Common myeloid progenitor, CD34-positive (primary cell): ENCODE measurements at regions of chr17 and their contacts with region 1.

Region 1: GRCh38 chr17:44086364-44087311 is 16.1 kb downstream of the G6PC3 start:
- DNase-seq: no peak
- H3K4me3 ChIP-seq: no peak overlapping the region
- H3K27ac ChIP-seq: peak overlapping the region in 1 of 2 experiments; percentile 25
- H3K4me1 ChIP-seq: no peaks in the 10 kb centered on the region
- H3K27me3 ChIP-seq: no peaks in the 10 kb centered on the region

Region 2: DNA sequence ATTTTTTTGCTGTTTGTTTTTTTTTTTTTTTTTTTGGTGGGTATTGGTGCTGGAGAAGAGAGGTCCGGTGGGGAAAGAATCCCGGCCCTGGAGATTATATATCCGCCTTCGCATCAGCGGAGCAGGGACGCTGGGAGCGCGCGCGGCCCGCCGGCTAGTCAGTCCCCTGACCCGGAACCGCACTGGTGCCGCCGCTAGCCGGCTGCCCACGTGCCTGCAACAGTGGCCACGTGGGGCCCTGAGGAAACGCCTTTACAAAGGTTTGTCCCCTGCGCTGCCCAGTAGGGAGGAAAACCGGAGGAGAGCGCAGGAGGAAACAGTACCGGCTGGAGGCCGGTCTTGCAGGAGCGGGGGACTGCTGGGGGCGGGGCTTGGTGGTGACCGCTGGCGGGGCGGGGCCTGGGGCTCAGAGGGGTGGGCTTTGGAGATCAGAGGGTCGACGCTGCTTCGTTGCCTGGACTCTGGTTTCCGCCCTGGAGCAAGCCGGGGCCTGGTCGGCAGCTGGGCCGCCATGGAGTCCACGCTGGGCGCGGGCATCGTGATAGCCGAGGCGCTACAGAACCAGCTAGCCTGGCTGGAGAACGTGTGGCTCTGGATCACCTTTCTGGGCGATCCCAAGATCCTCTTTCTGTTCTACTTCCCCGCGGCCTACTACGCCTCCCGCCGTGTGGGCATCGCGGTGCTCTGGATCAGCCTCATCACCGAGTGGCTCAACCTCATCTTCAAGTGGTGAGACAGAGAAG is 16.0 kb before region 1 on chr17 and contains the start of gene G6PC3:
- CTCF ChIA-PET with region 1: interaction called, 19 read pairs
- POLR2A ChIA-PET with region 1: interaction called, 4 read pairs
- DNase-seq: peak; percentile 94 to 97 (median 95)
- H3K4me3 ChIP-seq: peak within 1 kb of the TSS; percentile 47 to 91 (median 73)
- H3K27ac ChIP-seq: peak within 1 kb of the TSS; percentile 46 to 78
- H3K4me1 ChIP-seq: peaks cover 15 to 43% (median 35%) of the 10 kb centered on the region in 4 experiments
- H3K27me3 ChIP-seq: no peaks in the 10 kb centered on the region

Region 3: DNA sequence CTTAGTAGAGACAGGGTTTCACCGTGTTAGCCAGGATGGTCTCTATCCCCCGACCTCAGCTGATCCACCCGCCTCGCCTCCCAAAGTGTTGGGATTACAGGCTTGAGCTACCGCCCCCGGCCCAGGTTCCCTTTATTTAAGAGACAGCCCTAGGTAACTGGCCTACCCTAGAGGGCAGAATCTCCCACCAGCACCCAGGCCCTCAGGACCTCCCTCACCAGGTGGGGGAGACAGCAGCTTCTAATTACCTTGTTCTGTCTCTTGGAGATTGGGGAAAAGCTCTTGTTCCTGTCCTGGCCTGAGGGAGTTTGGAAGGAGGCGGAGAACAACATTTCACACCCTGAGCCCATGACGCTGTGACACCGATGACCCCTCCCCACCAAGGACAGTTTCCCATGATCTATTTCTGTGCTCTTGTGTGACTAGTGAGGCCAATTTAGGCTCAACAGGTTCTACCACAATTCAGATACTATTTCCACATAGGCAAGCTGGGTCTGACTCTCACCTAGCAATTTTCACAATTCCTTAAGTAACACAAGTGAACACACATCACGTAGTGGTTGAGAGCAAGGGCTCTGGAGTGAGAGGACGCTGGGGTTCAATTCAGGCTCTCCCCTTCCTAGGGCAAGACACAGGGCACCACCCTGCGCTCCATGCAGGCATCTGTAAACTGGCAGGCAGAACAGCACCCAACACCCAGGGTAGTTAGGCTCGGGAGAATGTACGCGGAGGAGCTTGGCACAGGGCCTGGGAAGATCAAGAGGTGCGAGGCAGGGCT is 16.4 kb after region 1 on chr17:
- CTCF ChIA-PET with region 1: interaction called, 16 read pairs
- POLR2A ChIA-PET with region 1: no interaction called
- DNase-seq: no peak
- H3K4me3 ChIP-seq: no peak overlapping the region
- H3K27ac ChIP-seq: no peak overlapping the region
- H3K4me1 ChIP-seq: peaks cover 0 to 30% (median 9%) of the 10 kb centered on the region in 4 experiments
- H3K27me3 ChIP-seq: no peaks in the 10 kb centered on the region

Region 4: DNA sequence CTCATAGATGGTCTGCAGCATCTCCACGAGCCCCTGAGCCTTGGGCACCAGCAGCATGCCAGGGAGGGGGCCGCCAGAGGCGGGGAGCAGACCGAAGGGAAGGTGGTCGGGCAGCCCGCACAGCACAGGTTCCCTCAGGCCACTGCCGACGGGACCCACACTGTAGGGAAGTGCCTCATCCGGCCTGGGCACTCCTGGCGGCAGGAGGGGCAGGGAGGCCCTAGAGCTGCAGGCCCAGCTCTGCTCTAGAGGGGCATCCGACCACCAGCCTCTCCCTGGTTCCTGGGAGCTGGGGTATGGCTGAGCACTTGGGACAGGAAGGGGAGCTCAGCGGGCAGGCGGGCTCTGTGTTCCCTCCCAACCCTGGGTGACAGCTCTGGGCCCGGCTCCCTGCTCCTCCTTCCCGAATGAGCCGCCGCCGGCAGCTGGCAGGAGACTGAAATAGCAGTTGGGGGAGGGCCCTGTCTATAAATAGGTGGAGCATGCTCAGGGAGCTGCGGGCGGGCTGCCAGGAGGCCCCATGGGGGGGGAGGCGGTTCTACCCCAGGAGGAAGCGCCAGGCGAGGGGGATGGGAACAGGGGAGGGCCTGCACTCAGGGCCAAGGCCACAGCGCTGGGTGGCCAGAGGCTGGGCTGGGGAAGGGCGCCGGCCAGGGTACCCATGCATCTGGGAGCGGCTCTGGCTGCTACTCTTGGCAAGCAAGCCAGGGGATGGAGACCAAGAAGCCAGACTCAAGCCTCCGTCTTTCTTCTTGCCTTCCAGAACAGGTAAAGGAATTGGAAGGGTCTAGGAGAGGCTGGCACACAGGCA is 24.4 kb after region 1 on chr17:
- CTCF ChIA-PET with region 1: interaction called, 22 read pairs
- POLR2A ChIA-PET with region 1: no interaction called
- DNase-seq: peak; percentile 57 to 81 (median 78)
- H3K4me3 ChIP-seq: peak overlapping the region in 6 of 7 experiments; percentile 26 to 61 (median 50)
- H3K27ac ChIP-seq: peak overlapping the region in 1 of 2 experiments; percentile 22
- H3K4me1 ChIP-seq: peaks cover 4 to 88% (median 56%) of the 10 kb centered on the region in 4 experiments
- H3K27me3 ChIP-seq: no peaks in the 10 kb centered on the region

Region 5: GRCh38 chr17:44199553-44200477 is 113.2 kb after region 1 on chr17 and contains the start of gene ATXN7L3:
- CTCF ChIA-PET with region 1: no interaction called
- POLR2A ChIA-PET with region 1: no interaction called
- DNase-seq: peak; percentile 98 to 99 (median 99)
- H3K4me3 ChIP-seq: peak within 1 kb of the TSS; percentile 72 to 95 (median 82)
- H3K27ac ChIP-seq: peak within 1 kb of the TSS; percentile 72 to 92
- H3K4me1 ChIP-seq: peaks cover 6 to 49% (median 45%) of the 10 kb centered on the region in 4 experiments
- H3K27me3 ChIP-seq: no peaks in the 10 kb centered on the region

Region 6: DNA sequence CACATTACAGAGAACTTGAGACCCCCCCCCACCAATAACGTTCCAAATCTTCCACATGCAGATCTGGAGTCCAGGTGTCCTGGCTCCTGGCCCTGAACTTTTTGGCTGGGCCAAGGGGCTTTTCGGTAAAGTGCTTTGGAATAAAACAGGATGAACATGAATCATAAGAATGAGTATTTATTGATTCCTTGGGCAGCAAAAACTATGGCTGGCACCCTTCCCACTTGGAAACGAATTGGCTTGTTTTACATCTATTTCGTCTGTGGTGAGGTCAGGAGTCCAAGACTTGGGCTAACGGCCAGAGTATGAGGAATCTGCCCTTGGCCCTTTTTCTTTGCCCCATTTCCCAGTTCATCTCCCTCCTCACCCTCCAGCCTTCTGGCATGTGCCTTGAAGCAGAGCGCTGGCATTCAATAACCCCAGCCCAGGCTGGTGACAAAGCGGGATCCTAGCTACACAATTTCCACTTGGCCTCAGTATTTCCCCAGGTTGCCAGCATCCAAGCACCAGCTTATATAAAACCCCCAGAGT is 137.0 kb after region 1 on chr17:
- CTCF ChIA-PET with region 1: no interaction called
- POLR2A ChIA-PET with region 1: no interaction called
- DNase-seq: no peak
- H3K4me3 ChIP-seq: no peak overlapping the region
- H3K27ac ChIP-seq: no peak overlapping the region
- H3K4me1 ChIP-seq: peaks cover 0 to 18% (median 14%) of the 10 kb centered on the region in 4 experiments
- H3K27me3 ChIP-seq: no peaks in the 10 kb centered on the region